Natural killer cell (primary cell): ENCODE measurements at regions of chr14 and their contacts with region 1.

Region 1: GRCh38 chr14:23588884-23589598 is 10.5 kb upstream of the JPH4 start:
- DNase-seq: peak; percentile 70 to 91
- ATAC-seq: peak; percentile 97 to 100 (median 99)
- H3K4me3 ChIP-seq: no peak overlapping the region
- H3K4me3 Mint-ChIP-seq: no peak overlapping the region
- H3K27ac ChIP-seq: no peak overlapping the region
- H3K27ac Mint-ChIP-seq: no peak overlapping the region
- H3K4me1 ChIP-seq: peaks cover 8% of the 10 kb centered on the region
- H3K4me1 Mint-ChIP-seq: peaks cover 10% of the 10 kb centered on the region in 2 donors
- H3K27me3 ChIP-seq: no peaks in the 10 kb centered on the region
- H3K27me3 Mint-ChIP-seq: peaks cover 12 to 29% of the 10 kb centered on the region in 2 donors
- CTCF ChIP-seq: peak; percentile 63

Region 2: GRCh38 chr14:23551164-23551949 is 37.7 kb before region 1 on chr14 and contains the start of gene ZFHX2:
- intact Hi-C with region 1: no loop called
- DNase-seq: peak; percentile 54 to 84
- ATAC-seq: peak; percentile 56 to 62 (median 61)
- H3K4me3 ChIP-seq: peak within 1 kb of the TSS; percentile 66
- H3K4me3 Mint-ChIP-seq: no peak within 1 kb of the TSS
- H3K27ac ChIP-seq: no peak within 1 kb of the TSS
- H3K27ac Mint-ChIP-seq: peak within 1 kb of the TSS in 1 of 2 donors; percentile 60
- H3K4me1 ChIP-seq: peaks cover 26% of the 10 kb centered on the region
- H3K4me1 Mint-ChIP-seq: peaks cover 11 to 20% of the 10 kb centered on the region in 2 donors
- H3K27me3 ChIP-seq: peaks cover 9% of the 10 kb centered on the region
- H3K27me3 Mint-ChIP-seq: no peaks in the 10 kb centered on the region
- CTCF ChIP-seq: no peak
- total RNA-seq, gene ZFHX2: 0.07 to 0.72 (median 0.45) TPM

Region 3: DNA sequence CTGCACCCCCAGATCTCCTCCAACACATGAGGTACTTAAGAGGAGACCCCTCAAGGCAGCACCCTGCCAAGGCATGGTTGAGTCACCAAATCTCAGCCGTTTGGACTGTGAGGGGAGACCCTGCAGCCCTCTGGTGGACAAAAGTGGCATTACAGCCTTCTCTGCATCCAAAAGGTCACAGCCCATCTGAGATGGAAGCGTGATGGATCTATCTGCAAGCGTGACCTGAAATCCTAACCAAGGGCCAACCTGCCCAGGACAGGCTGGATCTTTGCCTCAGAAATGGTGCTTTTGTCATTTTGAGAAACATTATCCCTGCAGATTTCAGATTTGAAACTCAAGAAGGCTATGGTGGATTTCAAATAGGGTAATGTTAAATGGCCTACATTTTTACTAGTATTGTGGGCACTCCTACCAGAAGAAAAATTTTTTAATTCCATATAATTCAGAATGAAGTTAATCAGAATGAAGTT is 340.8 kb after region 1 on chr14:
- intact Hi-C with region 1: loop called (anchors 1 kb)
- DNase-seq: peak; percentile 75 to 91
- ATAC-seq: peak; percentile 87 to 100 (median 97)
- H3K4me3 ChIP-seq: no peak overlapping the region
- H3K4me3 Mint-ChIP-seq: no peak overlapping the region
- H3K27ac ChIP-seq: no peak overlapping the region
- H3K27ac Mint-ChIP-seq: no peak overlapping the region
- H3K4me1 ChIP-seq: no peaks in the 10 kb centered on the region
- H3K4me1 Mint-ChIP-seq: no peaks in the 10 kb centered on the region
- H3K27me3 ChIP-seq: no peaks in the 10 kb centered on the region
- H3K27me3 Mint-ChIP-seq: peaks cover 0 to 3% of the 10 kb centered on the region in 2 donors
- CTCF ChIP-seq: peak; percentile 95

Region 4: GRCh38 chr14:23953464-23954278 is 364.6 kb after region 1 on chr14 and contains the start of gene DHRS4:
- intact Hi-C with region 1: loop called (anchors 1 kb)
- DNase-seq: peak; percentile 67 to 91
- ATAC-seq: peak; percentile 88 to 94 (median 89)
- H3K4me3 ChIP-seq: peak within 1 kb of the TSS; percentile 66
- H3K4me3 Mint-ChIP-seq: peak within 1 kb of the TSS; percentile 92
- H3K27ac ChIP-seq: peak within 1 kb of the TSS; percentile 61
- H3K27ac Mint-ChIP-seq: peak within 1 kb of the TSS; percentile 85 to 95
- H3K4me1 ChIP-seq: peaks cover 21% of the 10 kb centered on the region
- H3K4me1 Mint-ChIP-seq: peaks cover 25 to 31% of the 10 kb centered on the region in 2 donors
- H3K27me3 ChIP-seq: no peaks in the 10 kb centered on the region
- H3K27me3 Mint-ChIP-seq: no peaks in the 10 kb centered on the region
- CTCF ChIP-seq: peak; percentile 78
- total RNA-seq, gene DHRS4: 7.5 to 10.1 (median 9.9) TPM